Endothelial cell of umbilical vein (primary cell): ENCODE measurements at regions of chr1 and their contacts with region 1.

Region 1: GRCh38 chr1:93804412-93804811 is 74.6 kb downstream of the DNTTIP2 start:
- DNase-seq: peak; percentile 97
- H3K4me3 ChIP-seq: peak overlapping the region in 1 of 3 experiments; percentile 31
- H3K27ac ChIP-seq: peak overlapping the region; percentile 72
- H3K4me1 ChIP-seq: peaks cover 33% of the 10 kb centered on the region
- H3K27me3 ChIP-seq: no peaks in the 10 kb centered on the region
- CTCF ChIP-seq: no peak
- POLR2A ChIP-seq: peak; percentile 71

Region 2: GRCh38 chr1:93692983-93693591 is 111.3 kb before region 1 on chr1:
- CTCF ChIA-PET with region 1: no interaction called
- POLR2A ChIA-PET with region 1: no interaction called
- dilution Hi-C with region 1: no loop called
- intact Hi-C with region 1: loop called (anchors 5 kb)
- DNase-seq: peak; percentile 77
- H3K4me3 ChIP-seq: no peak overlapping the region
- H3K27ac ChIP-seq: peak overlapping the region; percentile 85
- H3K4me1 ChIP-seq: peaks cover 27% of the 10 kb centered on the region
- H3K27me3 ChIP-seq: no peaks in the 10 kb centered on the region
- CTCF ChIP-seq: no peak
- POLR2A ChIP-seq: no peak

Region 3: GRCh38 chr1:93749894-93750301 is 54.5 kb before region 1 on chr1:
- CTCF ChIA-PET with region 1: interaction called, 6 read pairs
- POLR2A ChIA-PET with region 1: no interaction called
- dilution Hi-C with region 1: no loop called
- intact Hi-C with region 1: loop called (anchors 1 kb)
- DNase-seq: peak; percentile 15
- H3K4me3 ChIP-seq: no peak overlapping the region
- H3K27ac ChIP-seq: no peak overlapping the region
- H3K4me1 ChIP-seq: peaks cover 15% of the 10 kb centered on the region
- H3K27me3 ChIP-seq: no peaks in the 10 kb centered on the region
- CTCF ChIP-seq: peak in 1 of 2 donors; percentile 3
- POLR2A ChIP-seq: no peak

Region 4: GRCh38 chr1:93779540-93780192 is 24.7 kb before region 1 on chr1:
- CTCF ChIA-PET with region 1: interaction called, 6 read pairs
- POLR2A ChIA-PET with region 1: no interaction called
- dilution Hi-C with region 1: no loop called
- intact Hi-C with region 1: loop called (anchors 1 kb)
- DNase-seq: peak; percentile 84
- H3K4me3 ChIP-seq: no peak overlapping the region
- H3K27ac ChIP-seq: peak overlapping the region; percentile 93
- H3K4me1 ChIP-seq: peaks cover 17% of the 10 kb centered on the region
- H3K27me3 ChIP-seq: no peaks in the 10 kb centered on the region
- CTCF ChIP-seq: peak in 1 of 2 donors; percentile 19
- POLR2A ChIP-seq: no peak

Region 5: DNA sequence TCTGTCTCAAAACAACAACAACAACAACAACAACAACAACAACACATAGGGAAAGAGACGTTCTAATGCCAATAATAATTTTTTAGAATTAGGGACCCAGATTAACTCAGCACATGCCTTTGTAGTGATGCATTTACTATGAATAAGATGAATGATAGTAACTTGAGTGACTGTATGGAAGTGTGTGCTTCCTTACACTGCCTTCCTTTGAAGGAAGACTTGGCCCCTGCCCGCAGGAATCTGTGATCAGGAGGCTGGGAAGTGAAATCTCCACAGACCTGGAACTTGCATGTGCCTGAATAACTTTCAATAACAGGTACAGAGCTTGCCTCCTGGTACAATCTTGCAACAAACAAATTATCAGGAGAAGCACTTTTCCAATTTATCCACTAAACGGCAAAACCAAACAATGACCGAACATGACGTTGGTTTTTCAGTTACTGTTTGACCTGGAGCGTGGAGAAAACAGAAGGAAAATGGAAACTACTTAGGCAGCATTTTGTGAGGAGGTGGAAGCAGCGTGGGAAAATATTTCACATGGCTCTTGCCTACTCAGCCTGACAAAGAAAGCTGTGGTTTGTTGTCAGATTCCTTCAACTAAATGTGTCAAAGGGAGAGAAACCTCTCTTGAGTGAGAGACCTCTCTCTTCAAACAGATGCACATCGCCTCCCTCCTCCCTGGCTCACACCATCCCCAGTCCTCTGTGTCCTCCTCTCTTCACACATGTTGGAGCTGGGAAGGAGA is 326.6 kb after region 1 on chr1:
- CTCF ChIA-PET with region 1: no interaction called
- POLR2A ChIA-PET with region 1: no interaction called
- dilution Hi-C with region 1: no loop called
- intact Hi-C with region 1: no loop called
- DNase-seq: no peak
- H3K4me3 ChIP-seq: no peak overlapping the region
- H3K27ac ChIP-seq: no peak overlapping the region
- H3K4me1 ChIP-seq: peaks cover 14% of the 10 kb centered on the region
- H3K27me3 ChIP-seq: no peaks in the 10 kb centered on the region
- CTCF ChIP-seq: no peak
- POLR2A ChIP-seq: no peak